Naive thymus-derived CD4-positive, alpha-beta T cell (primary cell): ENCODE measurements at regions of chr20 and their contacts with region 1.

Region 1: GRCh38 chr20:324177-325044 is 941 bp upstream of the SOX12 start:
- DNase-seq: peak; percentile 74 to 96 (median 84)
- ATAC-seq: peak; percentile 75
- H3K4me3 ChIP-seq: peak overlapping the region; percentile 80
- H3K4me3 Mint-ChIP-seq: peak overlapping the region; percentile 88 to 97 (median 94)
- H3K27ac ChIP-seq: peak overlapping the region; percentile 77
- H3K27ac Mint-ChIP-seq: peak overlapping the region; percentile 84 to 96 (median 94)
- H3K4me1 ChIP-seq: peaks cover 7 to 9% of the 10 kb centered on the region in 2 donors
- H3K4me1 Mint-ChIP-seq: peaks cover 7 to 20% (median 17%) of the 10 kb centered on the region in 7 donors
- H3K27me3 ChIP-seq: no peaks in the 10 kb centered on the region
- H3K27me3 Mint-ChIP-seq: peaks cover 0 to 8% (median 0%) of the 10 kb centered on the region in 5 donors

Region 2: GRCh38 chr20:235891-236290 is 88.5 kb before region 1 on chr20:
- CTCF ChIA-PET with region 1: no interaction called
- POLR2A ChIA-PET with region 1: no interaction called
- intact Hi-C with region 1: no loop called
- DNase-seq: no peak
- ATAC-seq: no peak
- H3K4me3 ChIP-seq: no peak overlapping the region
- H3K4me3 Mint-ChIP-seq: peak overlapping the region in 3 of 10 donors; percentile 38 to 85 (median 82)
- H3K27ac ChIP-seq: no peak overlapping the region
- H3K27ac Mint-ChIP-seq: peak overlapping the region in 4 of 9 donors; percentile 39 to 91 (median 84)
- H3K4me1 ChIP-seq: peaks cover 0 to 21% of the 10 kb centered on the region in 2 donors
- H3K4me1 Mint-ChIP-seq: peaks cover 9 to 33% (median 27%) of the 10 kb centered on the region in 7 donors
- H3K27me3 ChIP-seq: no peaks in the 10 kb centered on the region
- H3K27me3 Mint-ChIP-seq: no peaks in the 10 kb centered on the region

Region 3: DNA sequence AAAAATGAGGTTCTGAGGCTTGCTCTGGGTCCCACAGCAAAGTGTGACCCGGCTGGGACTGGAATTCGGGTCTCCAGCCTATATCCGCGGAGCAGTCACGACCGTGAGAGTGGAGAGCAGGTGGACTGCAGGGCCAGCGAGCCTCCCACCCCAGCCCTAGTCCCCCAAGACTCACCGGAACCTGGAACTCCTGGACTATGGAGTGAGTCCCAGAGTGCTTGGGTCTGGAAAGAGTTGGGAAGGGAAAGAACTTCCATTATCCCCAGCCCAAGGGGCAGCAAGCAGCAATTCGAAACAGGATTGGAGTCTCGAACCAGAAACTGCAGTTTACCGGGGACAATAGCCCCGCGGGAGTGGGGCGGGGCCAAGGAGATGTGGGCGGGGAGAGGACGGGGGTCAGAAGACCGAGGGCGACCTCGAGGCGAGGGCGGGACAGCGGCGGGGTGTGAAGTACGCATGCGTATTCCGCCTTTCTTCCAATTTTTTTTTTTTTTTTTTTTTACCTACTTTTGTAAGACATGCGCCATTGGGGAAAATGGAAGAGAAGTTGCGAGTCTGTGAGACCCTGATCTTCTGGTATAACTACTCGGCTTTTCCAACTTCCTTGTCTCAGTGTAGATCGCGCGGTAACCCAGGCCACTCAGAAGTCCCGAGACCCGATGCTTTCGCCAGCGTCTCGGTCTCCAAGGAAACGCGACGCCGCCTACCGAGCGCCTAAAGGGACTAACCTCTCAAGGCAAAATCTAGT is 34.2 kb before region 1 on chr20 and contains the start of gene C20orf96:
- CTCF ChIA-PET with region 1: no interaction called
- POLR2A ChIA-PET with region 1: interaction called, 74 read pairs
- intact Hi-C with region 1: loop called (anchors 1 kb)
- DNase-seq: peak; percentile 69 to 89 (median 80)
- ATAC-seq: peak; percentile 96
- H3K4me3 ChIP-seq: peak within 1 kb of the TSS; percentile 52
- H3K4me3 Mint-ChIP-seq: no peak within 1 kb of the TSS
- H3K27ac ChIP-seq: peak within 1 kb of the TSS; percentile 62
- H3K27ac Mint-ChIP-seq: peak within 1 kb of the TSS in 3 of 9 donors; percentile 28 to 81 (median 69)
- H3K4me1 ChIP-seq: peaks cover 11 to 20% of the 10 kb centered on the region in 2 donors
- H3K4me1 Mint-ChIP-seq: peaks cover 1 to 35% (median 9%) of the 10 kb centered on the region in 7 donors
- H3K27me3 ChIP-seq: no peaks in the 10 kb centered on the region
- H3K27me3 Mint-ChIP-seq: no peaks in the 10 kb centered on the region
- total RNA-seq, gene C20orf96: 3.4 to 5.7 (median 4.8) TPM

Region 4: GRCh38 chr20:309841-310644 is 14.4 kb before region 1 on chr20:
- CTCF ChIA-PET with region 1: interaction called, 7 read pairs
- POLR2A ChIA-PET with region 1: interaction called, 13 read pairs
- intact Hi-C with region 1: loop called (anchors 1 kb)
- DNase-seq: peak; percentile 66 to 84 (median 78)
- ATAC-seq: peak; percentile 100
- H3K4me3 ChIP-seq: peak overlapping the region; percentile 40
- H3K4me3 Mint-ChIP-seq: peak overlapping the region; percentile 81 to 90 (median 86)
- H3K27ac ChIP-seq: no peak overlapping the region
- H3K27ac Mint-ChIP-seq: peak overlapping the region; percentile 37 to 92 (median 81)
- H3K4me1 ChIP-seq: peaks cover 0 to 18% of the 10 kb centered on the region in 2 donors
- H3K4me1 Mint-ChIP-seq: peaks cover 11 to 25% (median 22%) of the 10 kb centered on the region in 7 donors
- H3K27me3 ChIP-seq: no peaks in the 10 kb centered on the region
- H3K27me3 Mint-ChIP-seq: peaks cover 0 to 3% (median 0%) of the 10 kb centered on the region in 5 donors

Region 5: GRCh38 chr20:381581-382290 is 57.3 kb after region 1 on chr20:
- CTCF ChIA-PET with region 1: interaction called, 4 read pairs
- POLR2A ChIA-PET with region 1: interaction called, 3 read pairs
- intact Hi-C with region 1: loop called in 1 of 2 experiments (anchors 2 kb)
- DNase-seq: peak; percentile 41 to 75 (median 64)
- ATAC-seq: peak; percentile 81
- H3K4me3 ChIP-seq: peak overlapping the region; percentile 64
- H3K4me3 Mint-ChIP-seq: peak overlapping the region; percentile 66 to 91 (median 84)
- H3K27ac ChIP-seq: peak overlapping the region; percentile 73
- H3K27ac Mint-ChIP-seq: peak overlapping the region; percentile 55 to 86 (median 78)
- H3K4me1 ChIP-seq: no peaks in the 10 kb centered on the region
- H3K4me1 Mint-ChIP-seq: peaks cover 4 to 34% (median 13%) of the 10 kb centered on the region in 7 donors
- H3K27me3 ChIP-seq: no peaks in the 10 kb centered on the region
- H3K27me3 Mint-ChIP-seq: peaks cover 0 to 3% (median 0%) of the 10 kb centered on the region in 5 donors

Region 6: GRCh38 chr20:2101865-2102584 is 1777.6 kb after region 1 on chr20:
- CTCF ChIA-PET with region 1: no interaction called
- POLR2A ChIA-PET with region 1: no interaction called
- intact Hi-C with region 1: loop called in 1 of 2 experiments (anchors 10 kb)
- DNase-seq: peak; percentile 82 to 94 (median 92)
- ATAC-seq: peak; percentile 88
- H3K4me3 ChIP-seq: peak overlapping the region; percentile 88
- H3K4me3 Mint-ChIP-seq: peak overlapping the region; percentile 90 to 97 (median 96)
- H3K27ac ChIP-seq: peak overlapping the region; percentile 96
- H3K27ac Mint-ChIP-seq: peak overlapping the region; percentile 99 to 100 (median 100)
- H3K4me1 ChIP-seq: peaks cover 29 to 38% of the 10 kb centered on the region in 2 donors
- H3K4me1 Mint-ChIP-seq: peaks cover 36 to 58% (median 44%) of the 10 kb centered on the region in 7 donors
- H3K27me3 ChIP-seq: no peaks in the 10 kb centered on the region
- H3K27me3 Mint-ChIP-seq: peaks cover 0 to 4% (median 0%) of the 10 kb centered on the region in 5 donors